ENCODE measurements at regions of chr12 and their contacts with region 1.

Region 1: DNA sequence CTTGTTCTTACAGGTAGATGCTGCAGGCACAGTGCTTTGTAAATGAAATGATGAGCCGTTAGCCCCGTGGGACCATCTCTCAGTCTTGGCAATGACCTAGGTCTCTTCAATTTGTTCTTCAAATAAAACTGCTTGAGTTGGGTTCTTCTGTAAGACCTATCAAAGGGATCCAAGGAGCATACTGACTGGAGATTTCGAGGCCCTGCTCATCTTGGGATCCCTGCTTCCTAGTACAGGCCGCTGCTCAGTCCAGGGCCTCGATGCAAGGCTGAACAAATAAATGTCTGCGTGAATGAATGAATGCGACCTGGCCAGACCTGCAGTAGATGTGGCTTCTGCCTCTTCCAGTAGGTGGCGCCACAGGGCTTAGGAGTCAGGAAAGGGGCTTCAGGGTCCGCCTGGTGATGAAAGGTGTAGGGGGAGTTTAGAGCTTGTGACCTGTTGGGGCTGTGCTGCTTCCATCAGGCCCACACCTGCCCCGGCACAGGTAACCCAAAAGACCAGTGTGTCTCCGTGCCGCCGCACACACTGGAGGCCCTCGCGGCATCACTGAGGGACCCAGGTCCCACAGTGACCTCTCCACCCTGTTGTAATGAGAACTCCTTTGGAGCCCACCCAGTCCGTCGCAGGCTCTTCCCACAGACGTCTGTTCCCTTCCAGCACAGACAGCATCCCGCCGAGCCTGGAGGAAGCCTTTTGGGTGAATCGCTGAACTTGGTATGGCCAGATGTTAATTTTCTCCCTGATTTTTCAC is 4.4 kb downstream of the CACNA1C start:
- DNase-seq: peak; percentile 80
- ATAC-seq: no peak
- H3K4me3 Mint-ChIP-seq: no peak overlapping the region
- H3K27ac Mint-ChIP-seq: no peak overlapping the region
- H3K4me1 Mint-ChIP-seq: peaks cover 6% of the 10 kb centered on the region
- H3K27me3 Mint-ChIP-seq: peaks cover 35% of the 10 kb centered on the region

Region 2: GRCh38 chr12:1880153-1880845 is 176.9 kb before region 1 on chr12:
- CTCF ChIA-PET with region 1: no interaction called
- POLR2A ChIA-PET with region 1: no interaction called
- intact Hi-C with region 1: no loop called
- DNase-seq: no peak
- ATAC-seq: no peak
- H3K4me3 Mint-ChIP-seq: no peak overlapping the region
- H3K27ac Mint-ChIP-seq: no peak overlapping the region
- H3K4me1 Mint-ChIP-seq: no peaks in the 10 kb centered on the region
- H3K27me3 Mint-ChIP-seq: peaks cover 1% of the 10 kb centered on the region

Region 3: DNA sequence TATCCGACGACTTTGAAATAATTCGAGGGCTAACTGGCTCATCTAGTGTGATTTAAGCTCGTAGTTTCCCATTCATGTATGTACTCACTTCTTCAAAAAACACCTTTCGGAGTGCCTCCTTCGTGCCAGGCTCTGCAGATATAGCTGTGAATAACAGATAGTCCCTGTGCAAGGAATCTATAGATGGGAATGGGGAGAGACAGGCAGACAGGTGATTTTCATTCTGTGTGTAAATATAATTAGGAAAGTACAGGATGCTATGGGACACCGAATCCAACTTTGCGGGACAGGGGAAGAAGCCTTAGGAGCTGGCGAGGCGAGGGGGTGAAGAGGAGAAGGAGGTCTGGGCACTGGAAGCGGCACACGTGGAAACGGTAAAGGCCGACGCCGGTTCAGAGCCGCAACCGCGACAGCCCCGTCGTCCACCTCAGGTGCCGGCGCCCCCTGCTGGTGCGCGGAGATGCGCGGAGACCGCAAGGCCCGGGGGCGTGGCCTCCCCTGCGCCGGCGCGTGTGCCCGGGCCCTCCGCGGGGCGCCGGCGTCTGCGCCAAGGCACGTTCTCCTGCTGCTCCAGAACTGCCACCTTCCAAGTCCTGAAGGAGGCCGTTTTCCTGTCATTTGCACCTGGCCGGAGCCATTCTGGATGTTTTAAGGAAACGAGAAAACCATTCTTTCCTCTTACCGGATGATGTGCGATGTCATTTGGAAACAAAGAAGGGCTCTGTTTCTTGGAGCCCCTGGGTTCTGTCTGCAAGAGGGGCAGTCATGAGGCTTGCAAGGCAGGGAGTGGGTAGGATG is 22.4 kb before region 1 on chr12:
- CTCF ChIA-PET with region 1: no interaction called
- POLR2A ChIA-PET with region 1: no interaction called
- intact Hi-C with region 1: loop called in 1 of 2 experiments (anchors 1 kb)
- DNase-seq: peak; percentile 93
- ATAC-seq: peak; percentile 100
- H3K4me3 Mint-ChIP-seq: peak overlapping the region; percentile 63
- H3K27ac Mint-ChIP-seq: no peak overlapping the region
- H3K4me1 Mint-ChIP-seq: peaks cover 12% of the 10 kb centered on the region
- H3K27me3 Mint-ChIP-seq: peaks cover 26% of the 10 kb centered on the region

Region 4: GRCh38 chr12:2284857-2285256 is 227.6 kb after region 1 on chr12:
- CTCF ChIA-PET with region 1: interaction called, 4 read pairs
- POLR2A ChIA-PET with region 1: no interaction called
- intact Hi-C with region 1: loop called in 1 of 2 experiments (anchors 1 kb)
- DNase-seq: peak; percentile 72
- ATAC-seq: peak; percentile 64
- H3K4me3 Mint-ChIP-seq: no peak overlapping the region
- H3K27ac Mint-ChIP-seq: no peak overlapping the region
- H3K4me1 Mint-ChIP-seq: peaks cover 4% of the 10 kb centered on the region
- H3K27me3 Mint-ChIP-seq: peaks cover 11% of the 10 kb centered on the region

Region 5: GRCh38 chr12:2291182-2291832 is 234.1 kb after region 1 on chr12:
- CTCF ChIA-PET with region 1: interaction called, 4 read pairs
- POLR2A ChIA-PET with region 1: no interaction called
- intact Hi-C with region 1: loop called in 1 of 2 experiments (anchors 1 kb)
- DNase-seq: peak; percentile 64
- ATAC-seq: peak; percentile 74
- H3K4me3 Mint-ChIP-seq: no peak overlapping the region
- H3K27ac Mint-ChIP-seq: no peak overlapping the region
- H3K4me1 Mint-ChIP-seq: peaks cover 11% of the 10 kb centered on the region
- H3K27me3 Mint-ChIP-seq: peaks cover 2% of the 10 kb centered on the region

Region 6: GRCh38 chr12:2583091-2583497 is 525.9 kb after region 1 on chr12:
- CTCF ChIA-PET with region 1: interaction called, 3 read pairs
- POLR2A ChIA-PET with region 1: no interaction called
- intact Hi-C with region 1: loop called (anchors 1 to 5 kb)
- DNase-seq: peak; percentile 83
- ATAC-seq: peak; percentile 95
- H3K4me3 Mint-ChIP-seq: no peak overlapping the region
- H3K27ac Mint-ChIP-seq: no peak overlapping the region
- H3K4me1 Mint-ChIP-seq: no peaks in the 10 kb centered on the region
- H3K27me3 Mint-ChIP-seq: peaks cover 43% of the 10 kb centered on the region

Measured in activated CD4-positive, alpha-beta T cell treated with anti-CD3 and anti-CD28 coated beads for 36 hours (primary cell).